SK-N-SH (cell line): ENCODE measurements at regions of chr3 and their contacts with region 1.

Region 1: DNA sequence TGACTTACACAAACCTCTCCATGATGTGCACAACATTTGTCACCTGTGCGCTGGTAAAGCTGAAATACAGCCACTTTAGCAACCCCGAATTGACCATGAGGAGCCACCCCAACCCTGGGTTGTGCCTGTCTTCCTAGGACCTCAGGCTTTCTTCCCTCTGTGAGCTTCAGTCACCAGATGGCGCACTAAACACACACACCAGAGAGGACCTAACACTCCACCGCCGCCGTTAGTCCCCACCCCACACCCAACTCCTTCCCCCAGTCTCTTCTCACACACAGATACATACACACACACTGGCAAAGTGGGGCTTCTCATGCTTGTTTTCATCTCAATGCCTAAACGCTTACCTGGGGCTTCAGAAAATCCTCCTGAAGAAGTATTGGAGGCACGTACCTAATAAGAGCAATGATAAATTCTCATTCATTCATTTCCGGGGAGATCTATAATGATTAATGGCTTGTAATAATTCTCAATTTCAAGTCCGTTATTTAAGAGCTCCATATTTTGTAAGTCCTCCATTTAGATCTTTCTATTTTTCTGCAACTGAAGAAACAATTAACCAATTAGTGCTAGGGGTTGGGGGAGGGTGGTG is 2.1 kb upstream of the CCDC80 start:
- DNase-seq: peak; percentile 85
- H3K4me3 ChIP-seq: peak overlapping the region; percentile 13 to 14; a peak in 2 of 4 replicates
- H3K27ac ChIP-seq: peak overlapping the region; percentile 71 to 96
- H3K4me1 ChIP-seq: peaks cover 16 to 36% of the 10 kb centered on the region in 2 experiments
- H3K27me3 ChIP-seq: no peaks in the 10 kb centered on the region
- CTCF ChIP-seq: peak; percentile 94
- EP300 ChIP-seq: 0 out of 4 replicates have a peak, but pooled peaks of 1 of the 2 experiments have one; percentile 25
- RAD21 ChIP-seq: peak; percentile 96

Region 2: GRCh38 chr3:112582244-112582874 is 60.6 kb before region 1 on chr3:
- CTCF ChIA-PET with region 1: interaction called, 33 read pairs
- POLR2A ChIA-PET with region 1: no interaction called
- DNase-seq: peak; percentile 14
- H3K4me3 ChIP-seq: no peak overlapping the region; a peak in 1 of 4 replicates
- H3K27ac ChIP-seq: no peak overlapping the region; a peak in 1 of 4 replicates
- H3K4me1 ChIP-seq: no peaks in the 10 kb centered on the region
- H3K27me3 ChIP-seq: no peaks in the 10 kb centered on the region
- CTCF ChIP-seq: peak; percentile 85
- EP300 ChIP-seq: no peak
- RAD21 ChIP-seq: peak; percentile 86

Region 3: GRCh38 chr3:112629425-112629824 is 13.6 kb before region 1 on chr3:
- CTCF ChIA-PET with region 1: interaction called, 13 read pairs
- POLR2A ChIA-PET with region 1: no interaction called
- DNase-seq: no peak
- H3K4me3 ChIP-seq: 0 out of 4 replicates have a peak overlapping the region, but pooled peaks of 1 of the 2 experiments have one; percentile 6
- H3K27ac ChIP-seq: peak overlapping the region; percentile 53 to 77; a peak in 3 of 4 replicates
- H3K4me1 ChIP-seq: peaks cover 9 to 45% of the 10 kb centered on the region in 2 experiments; a peak in 3 of 4 replicates
- H3K27me3 ChIP-seq: no peaks in the 10 kb centered on the region
- CTCF ChIP-seq: no peak
- EP300 ChIP-seq: no peak
- RAD21 ChIP-seq: no peak

Region 4: GRCh38 chr3:112734718-112735350 is 91.8 kb after region 1 on chr3:
- CTCF ChIA-PET with region 1: interaction called, 14 read pairs
- POLR2A ChIA-PET with region 1: no interaction called
- DNase-seq: peak; percentile 65
- H3K4me3 ChIP-seq: no peak overlapping the region; a peak in 1 of 4 replicates
- H3K27ac ChIP-seq: no peak overlapping the region
- H3K4me1 ChIP-seq: no peaks in the 10 kb centered on the region; a peak in 1 of 4 replicates
- H3K27me3 ChIP-seq: no peaks in the 10 kb centered on the region
- CTCF ChIP-seq: peak; percentile 76
- EP300 ChIP-seq: no peak
- RAD21 ChIP-seq: peak; percentile 91

Region 5: DNA sequence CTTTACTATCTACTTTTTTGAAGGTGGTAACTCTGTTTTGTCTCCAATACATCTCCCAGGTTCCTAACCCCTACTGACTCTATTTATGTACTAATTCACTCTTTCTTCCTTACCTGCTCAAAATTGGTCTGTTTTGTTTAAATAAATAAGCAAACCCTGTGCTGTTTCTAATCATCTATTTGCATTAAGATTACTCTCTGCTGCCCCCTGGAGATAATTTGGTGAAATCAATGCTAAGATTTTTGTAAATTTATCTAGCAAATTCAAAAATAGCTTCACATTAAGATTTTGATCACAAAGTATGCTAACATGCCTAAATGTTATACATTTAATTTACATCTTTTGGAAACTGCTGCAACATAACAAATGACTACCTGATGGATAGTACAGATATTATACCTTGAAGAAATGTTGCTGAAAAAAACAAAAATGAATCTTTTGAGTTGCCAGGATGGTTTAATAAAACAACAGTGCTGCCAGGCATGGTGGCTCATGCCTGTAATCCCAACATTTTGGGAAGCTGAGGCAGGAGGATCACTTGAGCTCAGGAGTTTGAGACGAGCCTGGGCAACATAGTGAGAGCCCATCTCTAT is 336.3 kb after region 1 on chr3:
- CTCF ChIA-PET with region 1: interaction called, 97 read pairs
- POLR2A ChIA-PET with region 1: no interaction called
- DNase-seq: peak; percentile 16
- H3K4me3 ChIP-seq: no peak overlapping the region; a peak in 1 of 4 replicates
- H3K27ac ChIP-seq: no peak overlapping the region
- H3K4me1 ChIP-seq: no peaks in the 10 kb centered on the region; a peak in 1 of 4 replicates
- H3K27me3 ChIP-seq: no peaks in the 10 kb centered on the region
- CTCF ChIP-seq: peak; percentile 84
- EP300 ChIP-seq: no peak
- RAD21 ChIP-seq: peak; percentile 77

Region 6: GRCh38 chr3:112990672-112991602 is 347.9 kb after region 1 on chr3 and contains the start of gene GTPBP8:
- CTCF ChIA-PET with region 1: interaction called, 21 read pairs
- POLR2A ChIA-PET with region 1: interaction called, 4 read pairs
- DNase-seq: peak; percentile 87
- H3K4me3 ChIP-seq: peak within 1 kb of the TSS; percentile 82 to 88
- H3K27ac ChIP-seq: peak within 1 kb of the TSS; percentile 88 to 99
- H3K4me1 ChIP-seq: peaks cover 9 to 12% of the 10 kb centered on the region in 2 experiments; a peak in 3 of 4 replicates
- H3K27me3 ChIP-seq: no peaks in the 10 kb centered on the region
- CTCF ChIP-seq: peak; percentile 25; the same call in 1 of the 2 replicates
- EP300 ChIP-seq: no peak
- RAD21 ChIP-seq: 0 out of 2 replicates have a peak, but pooled peaks have one; percentile 15
- polyA plus RNA-seq, gene GTPBP8: 19.2 and 20.1 TPM in 2 replicates

Region 7: GRCh38 chr3:113606539-113607218 is 963.7 kb after region 1 on chr3:
- CTCF ChIA-PET with region 1: no interaction called
- POLR2A ChIA-PET with region 1: no interaction called
- DNase-seq: no peak
- H3K4me3 ChIP-seq: no peak overlapping the region
- H3K27ac ChIP-seq: no peak overlapping the region
- H3K4me1 ChIP-seq: no peaks in the 10 kb centered on the region
- H3K27me3 ChIP-seq: no peaks in the 10 kb centered on the region
- CTCF ChIP-seq: no peak
- EP300 ChIP-seq: no peak
- RAD21 ChIP-seq: no peak